ENCODE measurements at regions of chr3 and their contacts with region 1.

Region 1: DNA sequence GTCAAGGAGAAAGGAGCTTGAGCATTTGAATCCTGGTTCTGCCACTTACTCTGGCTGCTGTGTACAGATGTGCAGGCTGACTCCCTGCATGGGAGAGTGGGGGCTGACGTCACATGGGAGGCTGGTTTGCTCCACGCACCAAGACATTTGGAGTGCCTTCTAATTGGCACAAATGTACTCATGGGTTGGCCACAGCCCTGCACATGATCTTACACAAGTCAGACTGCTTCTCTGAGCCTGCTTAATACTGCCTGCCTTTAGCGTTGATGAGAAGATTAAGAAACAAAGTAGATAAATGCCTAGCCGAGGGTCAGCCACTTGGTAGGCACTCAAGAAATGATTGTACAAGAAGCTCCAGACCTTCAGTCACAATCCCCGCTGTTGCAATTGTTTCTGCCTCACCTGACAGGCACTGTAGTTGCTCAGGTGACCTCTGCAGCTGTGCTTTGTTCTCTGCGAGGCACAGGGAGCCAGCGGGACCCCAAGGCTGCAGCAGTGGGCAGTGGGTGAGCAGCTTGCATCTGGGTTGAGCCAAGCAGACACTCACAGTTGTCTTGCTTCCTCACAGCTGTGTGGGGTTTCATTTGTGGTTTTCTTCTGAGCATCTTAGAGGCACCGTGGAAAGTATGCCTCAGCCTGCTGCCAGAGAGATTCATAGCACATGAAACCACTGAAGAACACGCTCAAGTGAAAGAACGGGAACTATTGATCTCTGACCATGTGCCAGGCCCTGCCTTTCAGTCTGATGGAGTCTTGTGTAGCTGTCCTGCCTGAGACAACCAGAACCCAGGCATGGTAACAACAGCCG is 33.1 kb downstream of the GRK7 start:
- DNase-seq: peak; percentile 13
- H3K4me3 ChIP-seq: no peak overlapping the region
- H3K27ac ChIP-seq: peak overlapping the region; percentile 88 to 92
- H3K4me1 ChIP-seq: peaks cover 21% of the 10 kb centered on the region
- H3K27me3 ChIP-seq: no peaks in the 10 kb centered on the region
- CTCF ChIP-seq: no peak
- POLR2A ChIP-seq: no peak

Region 2: DNA sequence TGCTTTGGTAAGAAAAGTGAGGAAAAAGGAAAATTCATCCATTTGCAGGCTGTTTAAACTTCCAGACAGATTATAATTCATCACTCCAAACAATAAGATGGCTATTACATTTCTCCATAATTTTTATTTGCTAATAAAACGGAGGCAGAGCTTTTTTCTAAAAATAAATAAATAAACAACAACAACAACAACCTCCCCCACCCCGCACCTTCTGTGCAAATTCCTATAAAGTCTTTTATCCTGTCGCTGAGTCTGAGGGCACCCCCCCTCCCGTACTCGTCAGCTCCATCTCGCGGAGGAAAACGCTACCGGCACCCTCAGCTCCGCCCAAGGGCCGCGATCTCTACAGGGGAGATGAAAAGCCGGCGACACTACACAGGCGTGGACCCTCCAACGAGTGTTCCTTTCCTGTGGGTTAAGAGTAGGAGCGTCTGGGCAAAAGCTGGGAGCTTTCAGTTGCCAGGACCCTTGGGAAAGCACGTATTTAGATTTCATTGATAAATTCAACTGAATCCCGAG is 79.1 kb after region 1 on chr3:
- intact Hi-C with region 1: loop called (anchors 5 kb)
- DNase-seq: peak; percentile 91
- H3K4me3 ChIP-seq: peak overlapping the region; percentile 95 to 96
- H3K27ac ChIP-seq: peak overlapping the region; percentile 97 to 99
- H3K4me1 ChIP-seq: peaks cover 11% of the 10 kb centered on the region
- H3K27me3 ChIP-seq: no peaks in the 10 kb centered on the region
- CTCF ChIP-seq: peak; percentile 71 to 90 (median 81)
- POLR2A ChIP-seq: no peak

Measured in prostate gland (tissue), 2 donors.